Activated CD4-positive, alpha-beta memory T cell treated with anti-CD3 and anti-CD28 coated beads, Interleukin-2, amount 10 ng/mL, durations not matched to agents 7 days and 5 days (primary cell): ENCODE measurements at regions of chr5 and their contacts with region 1.

Region 1: DNA sequence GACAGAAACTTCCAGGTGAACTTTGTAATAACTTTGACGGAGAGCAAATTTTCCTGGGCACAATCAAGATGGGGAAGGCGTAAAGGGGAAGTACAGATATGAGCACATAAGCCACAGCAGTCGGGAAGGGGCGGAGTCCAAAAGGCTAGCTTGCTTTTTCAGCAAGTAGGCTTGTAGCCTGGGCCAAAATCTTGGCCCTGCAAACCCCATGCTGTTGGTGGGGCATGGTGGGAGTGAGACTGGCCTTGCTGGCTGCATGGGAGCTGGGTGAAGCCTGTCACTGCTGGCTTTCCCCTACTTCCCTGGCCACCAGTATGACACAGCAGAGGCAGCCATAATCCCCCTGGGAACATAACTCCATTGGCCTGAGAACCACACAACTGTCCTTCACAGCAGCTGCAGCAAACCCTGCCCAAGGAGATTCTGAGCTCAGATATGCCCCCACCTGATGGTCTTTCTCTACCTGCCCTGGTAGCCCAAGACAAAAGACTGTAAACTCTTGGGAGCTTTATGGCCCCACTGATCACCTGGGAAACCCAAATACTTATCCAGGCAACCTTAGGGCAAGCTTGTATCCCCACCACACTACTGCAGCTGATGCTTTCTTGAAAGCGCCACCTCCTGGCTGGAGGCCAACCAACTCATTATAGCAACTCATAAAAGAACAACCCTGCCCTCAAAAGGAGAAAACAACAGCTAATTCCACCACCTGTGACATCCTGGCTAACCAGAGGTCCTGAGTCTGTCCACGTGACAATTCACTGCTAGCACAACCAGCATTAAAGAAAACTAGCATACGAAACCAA is 24.0 kb downstream of the DCTN4 start:
- DNase-seq: peak; percentile 42
- H3K4me3 Mint-ChIP-seq: no peak overlapping the region
- H3K27ac Mint-ChIP-seq: peak overlapping the region; percentile 47
- H3K4me1 Mint-ChIP-seq: peaks cover 57% of the 10 kb centered on the region
- H3K27me3 Mint-ChIP-seq: no peaks in the 10 kb centered on the region

Region 2: DNA sequence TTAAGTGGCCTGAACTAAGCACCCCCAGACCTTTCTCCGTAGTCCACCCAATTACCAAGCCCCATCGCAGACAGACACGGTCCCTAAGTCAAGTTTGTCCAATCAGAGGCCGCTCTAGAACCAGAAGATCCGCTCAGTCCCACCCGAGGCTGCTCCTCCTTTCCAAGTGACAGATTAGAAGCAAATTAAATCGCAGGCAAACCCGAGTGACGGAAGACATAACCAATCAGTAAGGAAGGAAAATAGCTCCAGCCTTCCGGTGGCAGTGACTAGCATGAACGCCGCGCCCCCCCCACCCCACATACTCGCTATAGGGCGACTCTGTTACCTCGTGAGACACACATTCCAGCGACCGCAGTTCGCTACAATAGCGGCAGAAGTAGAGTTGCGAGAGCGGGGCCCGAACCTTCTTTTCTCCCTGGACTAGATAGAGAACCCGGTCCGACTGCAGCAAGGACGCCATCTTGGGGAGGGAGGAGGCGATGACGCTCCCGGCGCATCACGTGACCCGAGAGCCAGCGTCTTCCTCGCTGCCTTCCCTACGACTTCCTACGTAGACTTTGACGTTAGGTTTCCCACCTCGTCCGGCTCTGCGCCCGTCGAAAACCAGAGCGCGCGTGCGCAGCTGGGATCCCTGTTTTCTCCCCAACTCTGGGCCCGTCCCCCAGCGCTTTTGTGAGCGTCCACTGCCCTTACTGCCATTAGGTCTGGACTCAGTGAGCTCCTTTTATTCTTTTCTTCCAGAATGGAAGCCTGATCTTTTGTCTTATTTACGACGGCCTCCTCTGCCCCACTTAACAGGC is 23.9 kb after region 1 on chr5 and contains the start of gene DCTN4:
- CTCF ChIA-PET with region 1: interaction called, 9 read pairs
- POLR2A ChIA-PET with region 1: interaction called, 14 read pairs
- DNase-seq: peak; percentile 93
- H3K4me3 Mint-ChIP-seq: no peak within 1 kb of the TSS
- H3K27ac Mint-ChIP-seq: no peak within 1 kb of the TSS
- H3K4me1 Mint-ChIP-seq: peaks cover 37% of the 10 kb centered on the region
- H3K27me3 Mint-ChIP-seq: no peaks in the 10 kb centered on the region
- total RNA-seq, gene DCTN4: 38.6 to 40.6 TPM

Region 3: GRCh38 chr5:150771034-150771795 is 36.4 kb after region 1 on chr5:
- CTCF ChIA-PET with region 1: no interaction called
- POLR2A ChIA-PET with region 1: no interaction called
- DNase-seq: no peak
- H3K4me3 Mint-ChIP-seq: no peak overlapping the region
- H3K27ac Mint-ChIP-seq: peak overlapping the region; percentile 56
- H3K4me1 Mint-ChIP-seq: peaks cover 31% of the 10 kb centered on the region
- H3K27me3 Mint-ChIP-seq: no peaks in the 10 kb centered on the region

Region 4: DNA sequence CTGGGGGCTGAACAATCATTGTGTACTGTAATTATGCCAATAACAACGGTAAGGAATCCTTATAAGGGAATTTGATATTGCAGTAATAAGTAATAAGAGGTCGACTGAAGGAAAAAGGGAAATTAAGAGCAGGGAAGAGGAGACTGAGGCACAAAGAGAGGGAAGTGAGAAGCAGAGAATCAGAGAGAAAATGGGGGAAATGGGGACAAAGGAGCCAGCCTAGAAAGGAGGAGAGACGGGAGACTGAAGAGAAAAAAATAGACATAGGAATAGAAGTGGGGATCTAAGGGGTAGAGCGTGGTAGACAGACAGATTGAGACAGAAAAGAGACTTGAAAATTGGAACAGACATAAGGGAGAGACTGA is 170.5 kb after region 1 on chr5:
- CTCF ChIA-PET with region 1: no interaction called
- POLR2A ChIA-PET with region 1: no interaction called
- DNase-seq: no peak
- H3K4me3 Mint-ChIP-seq: peak overlapping the region; percentile 62
- H3K27ac Mint-ChIP-seq: no peak overlapping the region
- H3K4me1 Mint-ChIP-seq: no peaks in the 10 kb centered on the region
- H3K27me3 Mint-ChIP-seq: no peaks in the 10 kb centered on the region